ENCODE measurements at regions of chr9 and their contacts with region 1.

Region 1: DNA sequence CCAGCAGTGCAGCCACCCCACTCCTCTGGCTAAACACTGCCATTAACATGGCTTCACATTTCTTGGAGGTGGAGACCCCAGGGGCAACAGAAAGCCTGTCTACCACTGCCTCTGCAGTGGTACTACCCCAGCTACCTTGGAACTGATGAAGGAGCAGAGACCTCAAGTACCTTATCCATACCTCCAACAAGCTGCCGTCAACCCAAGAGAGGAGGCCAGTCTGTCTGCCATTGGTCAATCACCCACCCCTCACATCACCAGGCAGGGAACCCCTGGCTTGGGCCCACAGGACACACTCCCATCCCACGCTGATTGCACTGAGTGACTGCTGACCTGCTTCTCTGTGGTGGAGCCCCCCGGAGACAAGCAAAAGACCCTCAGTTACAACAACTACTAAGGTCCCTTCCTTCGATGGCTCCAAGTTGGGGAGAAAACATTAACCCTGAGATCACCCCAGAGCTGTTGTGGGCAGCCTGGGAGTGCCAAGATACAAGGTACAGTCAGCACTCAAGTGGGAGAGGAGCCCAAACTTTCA is 5.6 kb downstream of the IFNA14 start:
- DNase-seq: no peak
- ATAC-seq: no peak
- H3K4me3 ChIP-seq: no peak overlapping the region
- H3K27ac ChIP-seq: no peak overlapping the region
- H3K4me1 ChIP-seq: no peaks in the 10 kb centered on the region
- H3K27me3 ChIP-seq: no peaks in the 10 kb centered on the region
- CTCF ChIP-seq: no peak
- POLR2A ChIP-seq: no peak
- RAD21 ChIP-seq: no peak

Region 2: GRCh38 chr9:20980832-20981455 is 253.3 kb before region 1 on chr9:
- CTCF ChIA-PET with region 1: no interaction called
- POLR2A ChIA-PET with region 1: no interaction called
- RAD21 ChIA-PET with region 1: no interaction called
- intact Hi-C with region 1: no loop called
- DNase-seq: no peak
- ATAC-seq: no peak
- H3K4me3 ChIP-seq: no peak overlapping the region
- H3K27ac ChIP-seq: no peak overlapping the region
- H3K4me1 ChIP-seq: no peaks in the 10 kb centered on the region
- H3K27me3 ChIP-seq: no peaks in the 10 kb centered on the region
- CTCF ChIP-seq: no peak
- POLR2A ChIP-seq: no peak
- RAD21 ChIP-seq: no peak

Region 3: DNA sequence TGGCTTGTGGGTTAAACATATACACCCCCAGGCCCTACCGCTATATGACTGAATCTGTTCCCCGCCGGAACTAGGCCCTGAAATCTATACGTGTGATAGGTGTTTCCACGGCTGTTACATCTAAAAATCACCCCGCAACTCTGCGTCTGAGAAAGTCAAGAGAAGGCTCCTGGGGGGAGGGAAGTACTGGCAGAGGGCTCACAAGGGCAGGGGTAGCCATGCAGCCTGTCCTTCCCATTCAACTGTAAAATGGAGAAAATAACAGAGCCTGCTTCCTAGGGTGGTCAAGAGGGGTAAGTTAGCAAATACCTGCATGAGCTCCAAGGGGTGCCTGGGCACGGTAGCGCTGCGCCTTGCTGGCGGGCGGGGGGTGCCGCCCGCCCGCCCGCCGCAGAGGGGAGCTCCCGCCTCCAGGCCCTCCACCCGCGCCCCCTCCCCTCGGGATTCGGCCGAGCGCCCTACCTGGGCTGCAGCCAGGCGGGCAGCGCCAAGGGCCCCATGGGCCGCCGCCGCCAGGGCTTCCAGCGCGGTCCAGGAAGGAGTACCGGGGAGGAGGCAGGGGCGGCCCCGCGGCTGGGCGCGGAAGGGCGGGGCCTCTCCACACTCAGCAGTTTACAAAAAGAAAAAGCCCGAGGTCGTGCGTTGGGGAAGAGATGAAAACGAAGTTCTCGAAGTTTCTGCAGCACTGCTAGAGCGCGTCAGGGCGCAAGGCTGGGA is 203.0 kb before region 1 on chr9 and contains the start of gene HACD4:
- CTCF ChIA-PET with region 1: no interaction called
- POLR2A ChIA-PET with region 1: no interaction called
- RAD21 ChIA-PET with region 1: no interaction called
- intact Hi-C with region 1: no loop called
- DNase-seq: no peak
- ATAC-seq: no peak
- H3K4me3 ChIP-seq: no peak within 1 kb of the TSS
- H3K27ac ChIP-seq: no peak within 1 kb of the TSS
- H3K4me1 ChIP-seq: no peaks in the 10 kb centered on the region
- H3K27me3 ChIP-seq: no peaks in the 10 kb centered on the region
- CTCF ChIP-seq: no peak
- POLR2A ChIP-seq: no peak
- RAD21 ChIP-seq: no peak
- total RNA-seq, gene HACD4: not detected

Region 4: DNA sequence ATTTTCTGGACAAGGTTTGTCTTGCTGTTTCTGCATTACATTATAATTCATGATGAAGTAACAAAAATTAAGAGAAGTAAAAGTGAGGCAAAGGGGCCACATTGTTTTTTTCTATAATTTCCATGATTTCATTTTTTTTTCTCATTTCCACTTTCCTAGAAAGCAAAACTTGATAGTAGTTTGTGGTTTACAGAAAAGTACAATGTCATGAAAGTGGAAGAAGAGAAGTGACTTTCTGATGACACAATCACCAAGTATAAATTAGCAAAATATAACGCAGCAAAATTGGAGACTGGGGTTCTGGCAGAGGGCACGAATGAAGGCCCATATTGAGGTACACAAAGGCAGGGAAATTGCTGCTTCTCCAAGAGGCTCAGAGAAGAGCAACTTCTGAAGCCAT is 10.6 kb after region 1 on chr9:
- CTCF ChIA-PET with region 1: interaction called, 7 read pairs
- POLR2A ChIA-PET with region 1: no interaction called
- RAD21 ChIA-PET with region 1: no interaction called
- intact Hi-C with region 1: loop called (anchors 1 kb)
- DNase-seq: no peak
- ATAC-seq: no peak
- H3K4me3 ChIP-seq: no peak overlapping the region
- H3K27ac ChIP-seq: no peak overlapping the region
- H3K4me1 ChIP-seq: no peaks in the 10 kb centered on the region
- H3K27me3 ChIP-seq: no peaks in the 10 kb centered on the region
- CTCF ChIP-seq: no peak
- POLR2A ChIP-seq: no peak
- RAD21 ChIP-seq: no peak

Region 5: DNA sequence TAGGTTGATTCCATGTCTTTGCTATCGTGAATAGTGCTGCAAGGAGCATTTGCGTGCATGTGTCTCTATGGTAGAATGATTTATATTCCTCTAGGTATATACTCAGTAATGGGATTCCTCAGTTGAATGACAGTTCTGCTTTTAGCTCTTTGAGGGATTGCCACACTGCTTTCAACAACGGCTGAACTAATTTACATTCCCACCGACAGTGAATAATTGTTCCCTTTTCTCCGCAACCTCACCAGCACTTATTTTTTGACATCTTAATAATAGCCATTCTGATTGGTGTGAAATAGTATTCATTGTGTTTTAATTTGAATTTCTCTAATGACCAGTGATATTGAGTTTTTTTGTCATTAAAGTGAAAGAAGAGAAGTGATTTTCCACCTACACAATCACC is 52.4 kb after region 1 on chr9:
- CTCF ChIA-PET with region 1: no interaction called
- POLR2A ChIA-PET with region 1: no interaction called
- RAD21 ChIA-PET with region 1: no interaction called
- intact Hi-C with region 1: no loop called
- DNase-seq: no peak
- ATAC-seq: no peak
- H3K4me3 ChIP-seq: no peak overlapping the region
- H3K27ac ChIP-seq: no peak overlapping the region
- H3K4me1 ChIP-seq: no peaks in the 10 kb centered on the region
- H3K27me3 ChIP-seq: 0 out of 2 replicates have a peak, but pooled peaks cover 3% of the 10 kb centered on the region
- CTCF ChIP-seq: no peak
- POLR2A ChIP-seq: no peak
- RAD21 ChIP-seq: no peak